Activated CD4-positive, alpha-beta T cell treated with anti-CD3 and anti-CD28 coated beads, Interleukin-2, amount 10 ng/mL, durations not matched to agents 7 days and 5 days (primary cell): ENCODE measurements at regions of chr19 and their contacts with region 1.

Region 1: GRCh38 chr19:48993175-48994034 is at the starts of genes GYS1 and RUVBL2:
- DNase-seq: peak; percentile 99
- H3K4me3 Mint-ChIP-seq: peak within 1 kb of the TSS; percentile 92
- H3K27ac Mint-ChIP-seq: peak within 1 kb of the TSS; percentile 97
- H3K4me1 Mint-ChIP-seq: peaks cover 41% of the 10 kb centered on the region
- H3K27me3 Mint-ChIP-seq: no peaks in the 10 kb centered on the region
- total RNA-seq, gene GYS1: 55.8 to 60.8 TPM
- total RNA-seq, gene RUVBL2: 82.2 to 89.4 TPM

Region 2: GRCh38 chr19:48965040-48965805 is 28.2 kb before region 1 on chr19 and contains the start of gene FTL:
- CTCF ChIA-PET with region 1: interaction called, 25 read pairs
- POLR2A ChIA-PET with region 1: interaction called, 3 read pairs
- DNase-seq: peak; percentile 92
- H3K4me3 Mint-ChIP-seq: peak within 1 kb of the TSS; percentile 90
- H3K27ac Mint-ChIP-seq: peak within 1 kb of the TSS; percentile 97
- H3K4me1 Mint-ChIP-seq: peaks cover 70% of the 10 kb centered on the region
- H3K27me3 Mint-ChIP-seq: no peaks in the 10 kb centered on the region
- total RNA-seq, gene FTL: 683 to 880 TPM

Region 3: DNA sequence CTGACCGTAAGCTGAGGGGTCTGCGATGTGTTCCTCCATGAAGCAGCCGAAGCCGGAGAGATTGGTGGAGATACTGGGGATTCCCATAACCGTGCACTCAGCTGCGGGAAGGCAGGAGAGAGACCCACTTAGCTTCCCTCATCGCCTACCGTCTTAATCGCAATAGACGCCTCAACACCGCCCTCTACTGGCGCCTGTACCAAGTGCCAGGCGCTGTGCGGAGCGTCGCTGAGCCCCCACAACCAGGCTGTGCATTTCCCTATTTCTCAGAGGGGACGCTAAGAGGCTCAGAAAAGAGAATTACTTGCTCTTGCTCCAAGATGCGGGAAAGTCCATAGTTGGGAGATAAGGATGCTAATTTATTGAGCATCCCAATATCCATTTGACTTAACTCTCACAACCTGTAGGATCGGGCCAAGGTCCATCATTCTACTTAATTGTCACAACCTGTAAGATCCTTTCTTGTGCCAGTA is 22.4 kb before region 1 on chr19:
- CTCF ChIA-PET with region 1: interaction called, 89 read pairs
- POLR2A ChIA-PET with region 1: interaction called, 3 read pairs
- DNase-seq: peak; percentile 84
- H3K4me3 Mint-ChIP-seq: no peak overlapping the region
- H3K27ac Mint-ChIP-seq: no peak overlapping the region
- H3K4me1 Mint-ChIP-seq: peaks cover 26% of the 10 kb centered on the region
- H3K27me3 Mint-ChIP-seq: no peaks in the 10 kb centered on the region

Region 4: GRCh38 chr19:48975947-48976847 is 17.2 kb before region 1 on chr19:
- CTCF ChIA-PET with region 1: interaction called, 89 read pairs
- POLR2A ChIA-PET with region 1: no interaction called
- DNase-seq: peak; percentile 47
- H3K4me3 Mint-ChIP-seq: no peak overlapping the region
- H3K27ac Mint-ChIP-seq: no peak overlapping the region
- H3K4me1 Mint-ChIP-seq: peaks cover 10% of the 10 kb centered on the region
- H3K27me3 Mint-ChIP-seq: no peaks in the 10 kb centered on the region

Region 5: DNA sequence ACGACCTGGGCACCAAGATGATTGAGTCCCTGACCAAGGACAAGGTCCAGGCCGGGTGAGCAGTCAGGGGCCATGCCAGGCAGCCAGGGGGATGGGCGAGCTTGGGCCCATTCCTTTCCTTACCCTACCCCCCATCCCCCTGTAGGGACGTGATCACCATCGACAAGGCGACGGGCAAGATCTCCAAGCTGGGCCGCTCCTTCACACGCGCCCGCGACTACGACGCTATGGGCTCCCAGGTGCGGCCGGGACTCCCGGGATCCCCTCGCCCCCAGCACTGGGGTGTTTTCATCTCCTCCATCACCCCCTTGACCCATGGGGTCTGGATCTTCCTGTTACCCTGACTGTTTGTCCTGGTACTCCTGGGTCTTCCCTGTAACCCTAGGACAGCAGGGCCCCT is 16.4 kb after region 1 on chr19:
- CTCF ChIA-PET with region 1: interaction called, 36 read pairs
- POLR2A ChIA-PET with region 1: no interaction called
- DNase-seq: no peak
- H3K4me3 Mint-ChIP-seq: no peak overlapping the region
- H3K27ac Mint-ChIP-seq: no peak overlapping the region
- H3K4me1 Mint-ChIP-seq: no peaks in the 10 kb centered on the region
- H3K27me3 Mint-ChIP-seq: no peaks in the 10 kb centered on the region

Region 6: DNA sequence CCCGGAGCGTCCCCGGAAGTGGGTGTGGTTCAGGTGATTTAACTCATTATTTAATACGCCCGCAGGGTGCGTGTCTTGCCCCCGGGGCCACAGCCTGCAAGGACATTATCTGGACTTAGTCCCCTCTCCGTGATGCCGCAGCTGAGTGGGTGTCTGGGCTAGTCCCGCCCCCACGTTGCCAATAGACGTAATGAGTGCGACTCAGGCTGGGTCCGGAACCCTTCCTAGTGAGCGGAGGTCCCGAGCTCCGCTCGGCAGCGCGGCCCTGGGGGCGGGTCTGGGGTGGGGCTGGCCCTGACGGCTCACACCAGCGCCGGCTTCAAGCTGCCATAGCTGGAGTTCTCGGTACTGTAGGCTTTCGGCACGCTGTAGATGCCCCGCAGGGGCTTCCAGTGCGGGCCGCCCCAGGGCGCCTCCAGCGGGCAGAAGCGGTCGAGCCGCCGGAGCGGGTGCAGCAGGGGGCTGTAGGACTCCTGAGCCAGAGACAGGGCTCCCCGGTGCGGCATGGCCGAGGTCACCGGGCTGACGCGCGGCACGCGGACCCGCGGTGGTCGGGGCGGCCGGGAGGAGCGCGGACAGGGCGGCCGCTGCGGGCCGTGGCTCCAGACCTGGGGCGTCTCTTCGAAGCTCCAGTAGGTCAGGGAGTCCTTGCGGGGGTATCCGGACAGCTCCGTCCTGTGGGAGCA is 24.4 kb after region 1 on chr19:
- CTCF ChIA-PET with region 1: interaction called, 23 read pairs
- POLR2A ChIA-PET with region 1: no interaction called
- DNase-seq: peak; percentile 62
- H3K4me3 Mint-ChIP-seq: peak overlapping the region; percentile 72
- H3K27ac Mint-ChIP-seq: no peak overlapping the region
- H3K4me1 Mint-ChIP-seq: peaks cover 31% of the 10 kb centered on the region
- H3K27me3 Mint-ChIP-seq: peaks cover 26% of the 10 kb centered on the region